Activated naive CD4-positive, alpha-beta T cell treated with anti-CD3 and anti-CD28 coated beads for 36 hours (primary cell): ENCODE measurements at regions of chr1 and their contacts with region 1.

Region 1: DNA sequence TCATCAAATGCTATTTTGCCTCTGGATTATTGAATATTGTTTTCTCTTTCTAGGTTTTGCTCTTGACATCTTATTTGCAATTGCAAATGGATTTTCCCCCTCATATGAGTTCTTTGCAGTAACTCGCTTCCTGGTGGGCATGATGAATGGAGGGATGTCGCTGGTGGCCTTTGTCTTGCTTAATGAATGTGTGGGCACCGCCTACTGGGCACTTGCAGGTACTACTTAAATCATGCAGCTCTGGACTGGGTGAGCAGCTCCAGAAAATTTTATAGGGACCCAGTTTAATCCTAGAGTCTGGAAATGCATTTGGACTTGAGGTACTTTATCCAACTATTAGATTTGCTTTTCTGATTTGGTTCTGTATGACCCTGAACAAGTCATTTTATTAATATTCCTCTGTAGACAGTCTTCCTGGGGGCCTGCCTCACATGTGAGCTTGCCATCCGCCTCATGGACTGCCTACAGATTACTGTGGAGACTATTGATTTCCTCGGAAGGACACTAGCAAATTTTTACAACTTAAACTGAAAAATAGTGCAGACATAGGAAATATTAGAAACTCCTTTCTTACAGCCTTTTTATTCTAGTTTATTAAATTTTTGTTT is 44.5 kb downstream of the SLC22A15 start:
- DNase-seq: peak; percentile 70
- H3K4me3 Mint-ChIP-seq: no peak overlapping the region
- H3K27ac Mint-ChIP-seq: no peak overlapping the region
- H3K4me1 Mint-ChIP-seq: no peaks in the 10 kb centered on the region
- H3K27me3 Mint-ChIP-seq: no peaks in the 10 kb centered on the region

Region 2: DNA sequence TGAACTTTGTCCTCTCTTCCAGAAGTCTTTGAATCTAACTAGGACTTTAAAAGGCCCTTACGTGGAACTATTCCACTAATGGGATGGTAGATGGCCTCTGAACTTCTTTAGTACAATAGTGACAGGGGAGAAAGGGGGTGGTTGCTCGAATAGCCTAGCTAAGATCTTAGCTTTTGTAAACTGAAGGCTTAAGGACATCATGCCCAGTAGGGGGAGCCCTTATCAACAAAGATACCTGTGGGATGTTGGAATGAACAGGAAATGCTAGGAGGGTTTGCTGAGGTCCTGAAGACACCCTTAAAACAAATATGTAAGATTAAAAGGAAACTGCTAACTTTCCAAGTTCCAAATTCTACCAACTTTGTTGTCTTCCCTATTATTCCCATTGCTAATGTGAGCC is 213.0 kb before region 1 on chr1:
- CTCF ChIA-PET with region 1: interaction called, 12 read pairs
- intact Hi-C with region 1: loop called (anchors 1 kb)
- DNase-seq: peak; percentile 67
- H3K4me3 Mint-ChIP-seq: no peak overlapping the region
- H3K27ac Mint-ChIP-seq: no peak overlapping the region
- H3K4me1 Mint-ChIP-seq: no peaks in the 10 kb centered on the region
- H3K27me3 Mint-ChIP-seq: peaks cover 20% of the 10 kb centered on the region